ENCODE measurements at regions of chr4 and their contacts with region 1.

Region 1: GRCh38 chr4:173013232-173013930 is 155.2 kb upstream of the GALNT7 start:
- DNase-seq: peak in 31 of 35 experiments; percentile 7 to 69 (median 33)
- ATAC-seq: peak in 2 of 4 experiments; percentile 53 to 68
- H3K4me3 ChIP-seq: no peak overlapping the region
- H3K4me3 Mint-ChIP-seq: no peak overlapping the region
- H3K27ac ChIP-seq: no peak overlapping the region
- H3K27ac Mint-ChIP-seq: no peak overlapping the region
- H3K4me1 ChIP-seq: no peaks in the 10 kb centered on the region
- H3K4me1 Mint-ChIP-seq: no peaks in the 10 kb centered on the region
- H3K27me3 ChIP-seq: peaks cover 0 to 2% of the 10 kb centered on the region in 2 experiments
- H3K27me3 Mint-ChIP-seq: no peaks in the 10 kb centered on the region

Region 2: GRCh38 chr4:173025131-173025530 is 11.8 kb after region 1 on chr4:
- CTCF ChIA-PET with region 1: interaction called, 11 to 20 read pairs
- POLR2A ChIA-PET with region 1: interaction called in 1 of 2 experiments, 4 read pairs
- DNase-seq: peak in 12 of 35 experiments; percentile 0 to 57 (median 6)
- ATAC-seq: peak in 3 of 4 experiments; percentile 40 to 77 (median 40)
- H3K4me3 ChIP-seq: no peak overlapping the region
- H3K4me3 Mint-ChIP-seq: no peak overlapping the region
- H3K27ac ChIP-seq: no peak overlapping the region
- H3K27ac Mint-ChIP-seq: no peak overlapping the region
- H3K4me1 ChIP-seq: no peaks in the 10 kb centered on the region
- H3K4me1 Mint-ChIP-seq: peaks cover 3 to 6% (median 4%) of the 10 kb centered on the region in 3 donors
- H3K27me3 ChIP-seq: no peaks in the 10 kb centered on the region
- H3K27me3 Mint-ChIP-seq: no peaks in the 10 kb centered on the region

Region 3: GRCh38 chr4:173169428-173170181 is 156.2 kb after region 1 on chr4:
- CTCF ChIA-PET with region 1: interaction called, 6 to 13 read pairs
- POLR2A ChIA-PET with region 1: no interaction called
- DNase-seq: peak; percentile 25 to 74 (median 48)
- ATAC-seq: peak; percentile 67 to 73 (median 70)
- H3K4me3 ChIP-seq: peak overlapping the region; percentile 58 to 78
- H3K4me3 Mint-ChIP-seq: peak overlapping the region; percentile 83 to 87 (median 84)
- H3K27ac ChIP-seq: no peak overlapping the region
- H3K27ac Mint-ChIP-seq: peak overlapping the region; percentile 74 to 84
- H3K4me1 ChIP-seq: peaks cover 15 to 20% of the 10 kb centered on the region in 2 experiments
- H3K4me1 Mint-ChIP-seq: peaks cover 52 to 65% (median 61%) of the 10 kb centered on the region in 3 donors
- H3K27me3 ChIP-seq: no peaks in the 10 kb centered on the region
- H3K27me3 Mint-ChIP-seq: no peaks in the 10 kb centered on the region

Region 4: DNA sequence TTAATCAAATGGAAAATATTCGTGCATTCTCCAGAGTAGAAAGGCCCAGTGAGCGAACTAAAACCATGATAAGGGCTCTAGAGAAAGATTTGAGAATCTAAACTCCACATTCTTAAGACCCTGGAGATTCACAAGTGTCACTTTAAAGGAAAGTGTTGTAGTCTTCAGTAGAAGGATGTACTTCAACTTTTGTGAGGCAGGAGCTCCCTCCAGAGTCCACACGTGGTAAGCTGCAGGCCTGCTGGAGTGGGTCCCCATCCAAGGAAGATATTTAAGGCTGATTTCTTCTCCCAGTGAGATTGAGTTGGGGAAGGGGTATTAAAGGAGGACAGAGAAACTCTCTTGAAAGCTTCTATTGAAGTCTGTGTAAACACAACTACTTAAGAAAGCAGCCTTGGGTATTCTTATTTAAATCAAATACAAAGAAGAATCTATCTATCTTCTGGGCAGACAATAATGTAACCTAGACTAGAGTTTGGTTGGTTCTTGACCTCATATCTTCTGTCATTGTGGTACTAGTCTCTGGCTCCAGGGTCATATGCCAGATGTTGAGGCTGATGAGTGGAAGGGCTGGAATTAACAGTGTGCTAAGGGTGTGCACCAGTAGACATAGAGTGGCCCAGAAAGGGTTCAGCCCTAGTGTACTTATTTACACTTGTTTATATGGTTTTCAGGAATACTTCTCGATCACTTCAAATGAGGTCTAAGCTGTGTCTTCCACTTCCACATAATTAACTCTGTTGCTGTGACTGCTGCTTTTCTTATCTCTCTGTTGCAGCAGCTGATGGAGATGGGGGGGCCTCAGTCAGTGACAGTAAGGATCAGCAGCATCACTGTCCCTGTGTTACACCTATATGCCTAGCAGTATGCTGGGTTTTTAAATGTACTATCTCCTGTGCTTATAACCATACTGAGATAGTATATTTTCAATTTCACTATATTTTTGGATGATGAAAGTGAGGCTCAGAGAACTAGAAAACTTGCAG is 244.6 kb after region 1 on chr4:
- CTCF ChIA-PET with region 1: interaction called, 69 to 81 read pairs
- POLR2A ChIA-PET with region 1: interaction called, 3 read pairs
- DNase-seq: peak in 34 of 35 experiments; percentile 9 to 72 (median 42)
- ATAC-seq: peak; percentile 73 to 88 (median 80)
- H3K4me3 ChIP-seq: no peak overlapping the region
- H3K4me3 Mint-ChIP-seq: no peak overlapping the region
- H3K27ac ChIP-seq: no peak overlapping the region
- H3K27ac Mint-ChIP-seq: no peak overlapping the region
- H3K4me1 ChIP-seq: no peaks in the 10 kb centered on the region
- H3K4me1 Mint-ChIP-seq: peaks cover 4 to 14% (median 6%) of the 10 kb centered on the region in 3 donors
- H3K27me3 ChIP-seq: no peaks in the 10 kb centered on the region
- H3K27me3 Mint-ChIP-seq: no peaks in the 10 kb centered on the region

Region 5: GRCh38 chr4:173420324-173420752 is 407.0 kb after region 1 on chr4:
- CTCF ChIA-PET with region 1: interaction called, 4 to 16 read pairs
- POLR2A ChIA-PET with region 1: no interaction called
- DNase-seq: peak in 1 of 35 experiments; percentile 43
- ATAC-seq: peak in 3 of 4 experiments; percentile 34 to 47 (median 44)
- H3K4me3 ChIP-seq: no peak overlapping the region
- H3K4me3 Mint-ChIP-seq: no peak overlapping the region
- H3K27ac ChIP-seq: no peak overlapping the region
- H3K27ac Mint-ChIP-seq: no peak overlapping the region
- H3K4me1 ChIP-seq: peaks cover 2 to 6% of the 10 kb centered on the region in 2 experiments
- H3K4me1 Mint-ChIP-seq: peaks cover 7 to 13% (median 9%) of the 10 kb centered on the region in 3 donors
- H3K27me3 ChIP-seq: no peaks in the 10 kb centered on the region
- H3K27me3 Mint-ChIP-seq: no peaks in the 10 kb centered on the region

Measured in T-cell (primary cell).